Activated CD4-positive, alpha-beta memory T cell treated with anti-CD3 and anti-CD28 coated beads, Interleukin-2, amount 10 ng/mL, durations not matched to agents 7 days and 5 days (primary cell): ENCODE measurements at regions of chr15 and their contacts with region 1.

Region 1: GRCh38 chr15:60798821-60799220 is 319.9 kb upstream of the ICE2 start:
- DNase-seq: no peak
- H3K4me3 Mint-ChIP-seq: no peak overlapping the region
- H3K27ac Mint-ChIP-seq: no peak overlapping the region
- H3K4me1 Mint-ChIP-seq: peaks cover 45% of the 10 kb centered on the region
- H3K27me3 Mint-ChIP-seq: peaks cover 3% of the 10 kb centered on the region

Region 2: GRCh38 chr15:60592371-60593169 is 206.3 kb before region 1 on chr15:
- CTCF ChIA-PET with region 1: no interaction called
- POLR2A ChIA-PET with region 1: no interaction called
- DNase-seq: peak; percentile 90
- H3K4me3 Mint-ChIP-seq: peak overlapping the region; percentile 83
- H3K27ac Mint-ChIP-seq: peak overlapping the region; percentile 69
- H3K4me1 Mint-ChIP-seq: peaks cover 53% of the 10 kb centered on the region
- H3K27me3 Mint-ChIP-seq: peaks cover 1% of the 10 kb centered on the region

Region 3: GRCh38 chr15:60787837-60788691 is 10.8 kb before region 1 on chr15:
- CTCF ChIA-PET with region 1: interaction called, 17 read pairs
- POLR2A ChIA-PET with region 1: interaction called, 11 read pairs
- DNase-seq: peak; percentile 47
- H3K4me3 Mint-ChIP-seq: no peak overlapping the region
- H3K27ac Mint-ChIP-seq: peak overlapping the region; percentile 72
- H3K4me1 Mint-ChIP-seq: peaks cover 21% of the 10 kb centered on the region
- H3K27me3 Mint-ChIP-seq: no peaks in the 10 kb centered on the region